Activated CD8-positive, alpha-beta T cell treated with anti-CD3 and anti-CD28 coated beads, Interleukin-2, amount 10 ng/mL, durations not matched to agents 7 days and 5 days (primary cell): ENCODE measurements at regions of chr9 and their contacts with region 1.

Region 1: DNA sequence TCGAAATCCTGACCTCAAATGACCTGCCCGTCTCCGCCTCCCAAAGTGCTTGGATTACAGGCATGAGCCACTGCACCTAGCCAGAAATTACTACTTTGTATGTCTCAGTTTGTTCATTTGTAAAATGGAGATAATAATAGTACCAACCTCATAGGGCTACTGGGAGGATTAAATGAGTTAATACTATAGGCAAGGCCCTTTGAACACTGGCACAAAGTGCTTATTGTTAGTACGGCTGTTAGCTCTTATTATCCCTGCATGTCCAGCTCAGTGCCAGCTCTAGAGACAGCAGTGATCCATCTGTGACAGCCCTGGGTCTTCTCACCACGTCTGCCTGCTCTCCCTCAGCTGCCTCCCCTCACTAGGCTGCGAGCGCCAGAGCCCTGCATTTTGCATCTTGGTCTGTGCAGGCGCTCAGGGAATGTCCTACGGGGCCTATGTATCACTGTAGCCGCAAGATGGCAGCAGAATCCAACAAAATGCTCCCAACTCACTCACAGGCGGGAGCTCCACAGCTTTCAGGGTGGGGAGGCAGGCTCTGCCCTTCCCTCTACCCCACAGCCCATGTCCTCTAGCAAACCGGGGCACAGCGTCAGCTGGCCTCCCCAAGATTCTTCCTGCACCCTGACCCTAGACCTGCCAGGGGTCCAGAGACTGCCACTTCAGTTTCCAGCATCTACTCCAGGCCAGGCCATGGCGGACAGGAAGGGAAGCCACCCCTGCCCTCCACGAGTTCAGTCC is 17.7 kb upstream of the AKNA start:
- DNase-seq: peak; percentile 90
- ATAC-seq: peak; percentile 98
- H3K4me3 Mint-ChIP-seq: no peak overlapping the region
- H3K27ac Mint-ChIP-seq: peak overlapping the region; percentile 62
- H3K4me1 Mint-ChIP-seq: peaks cover 14% of the 10 kb centered on the region
- H3K27me3 Mint-ChIP-seq: peaks cover 1% of the 10 kb centered on the region

Region 2: GRCh38 chr9:114207034-114207810 is 198.2 kb before region 1 on chr9:
- CTCF ChIA-PET with region 1: no interaction called
- POLR2A ChIA-PET with region 1: no interaction called
- DNase-seq: no peak
- ATAC-seq: no peak
- H3K4me3 Mint-ChIP-seq: no peak overlapping the region
- H3K27ac Mint-ChIP-seq: no peak overlapping the region
- H3K4me1 Mint-ChIP-seq: no peaks in the 10 kb centered on the region
- H3K27me3 Mint-ChIP-seq: no peaks in the 10 kb centered on the region

Region 3: GRCh38 chr9:114224247-114224610 is 181.2 kb before region 1 on chr9:
- CTCF ChIA-PET with region 1: no interaction called
- POLR2A ChIA-PET with region 1: no interaction called
- DNase-seq: no peak
- ATAC-seq: no peak
- H3K4me3 Mint-ChIP-seq: no peak overlapping the region
- H3K27ac Mint-ChIP-seq: no peak overlapping the region
- H3K4me1 Mint-ChIP-seq: no peaks in the 10 kb centered on the region
- H3K27me3 Mint-ChIP-seq: no peaks in the 10 kb centered on the region

Region 4: DNA sequence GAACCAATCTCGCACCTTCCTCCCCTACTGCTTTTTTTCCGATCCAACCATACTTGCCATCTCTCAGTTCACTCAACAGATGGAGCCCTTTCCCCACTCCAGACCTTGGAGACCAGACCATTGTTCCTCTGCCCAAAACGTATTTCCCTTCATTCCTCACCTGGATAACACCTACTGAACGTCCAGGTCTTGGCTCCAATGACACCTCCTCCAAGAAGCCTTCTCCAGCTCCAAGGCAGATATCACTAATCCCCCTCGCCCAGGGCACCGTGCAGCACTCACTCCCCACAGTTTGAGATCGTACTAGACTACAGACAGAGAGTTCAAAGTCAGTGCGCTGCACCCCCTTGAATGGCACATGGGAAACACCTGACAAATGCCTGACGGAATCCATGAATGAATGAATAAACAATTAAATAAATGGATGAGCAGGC is 29.4 kb after region 1 on chr9:
- CTCF ChIA-PET with region 1: interaction called, 29 read pairs
- POLR2A ChIA-PET with region 1: interaction called, 4 read pairs
- DNase-seq: no peak
- ATAC-seq: peak; percentile 30
- H3K4me3 Mint-ChIP-seq: no peak overlapping the region
- H3K27ac Mint-ChIP-seq: no peak overlapping the region
- H3K4me1 Mint-ChIP-seq: peaks cover 6% of the 10 kb centered on the region
- H3K27me3 Mint-ChIP-seq: peaks cover under 1% of the 10 kb centered on the region

Region 5: DNA sequence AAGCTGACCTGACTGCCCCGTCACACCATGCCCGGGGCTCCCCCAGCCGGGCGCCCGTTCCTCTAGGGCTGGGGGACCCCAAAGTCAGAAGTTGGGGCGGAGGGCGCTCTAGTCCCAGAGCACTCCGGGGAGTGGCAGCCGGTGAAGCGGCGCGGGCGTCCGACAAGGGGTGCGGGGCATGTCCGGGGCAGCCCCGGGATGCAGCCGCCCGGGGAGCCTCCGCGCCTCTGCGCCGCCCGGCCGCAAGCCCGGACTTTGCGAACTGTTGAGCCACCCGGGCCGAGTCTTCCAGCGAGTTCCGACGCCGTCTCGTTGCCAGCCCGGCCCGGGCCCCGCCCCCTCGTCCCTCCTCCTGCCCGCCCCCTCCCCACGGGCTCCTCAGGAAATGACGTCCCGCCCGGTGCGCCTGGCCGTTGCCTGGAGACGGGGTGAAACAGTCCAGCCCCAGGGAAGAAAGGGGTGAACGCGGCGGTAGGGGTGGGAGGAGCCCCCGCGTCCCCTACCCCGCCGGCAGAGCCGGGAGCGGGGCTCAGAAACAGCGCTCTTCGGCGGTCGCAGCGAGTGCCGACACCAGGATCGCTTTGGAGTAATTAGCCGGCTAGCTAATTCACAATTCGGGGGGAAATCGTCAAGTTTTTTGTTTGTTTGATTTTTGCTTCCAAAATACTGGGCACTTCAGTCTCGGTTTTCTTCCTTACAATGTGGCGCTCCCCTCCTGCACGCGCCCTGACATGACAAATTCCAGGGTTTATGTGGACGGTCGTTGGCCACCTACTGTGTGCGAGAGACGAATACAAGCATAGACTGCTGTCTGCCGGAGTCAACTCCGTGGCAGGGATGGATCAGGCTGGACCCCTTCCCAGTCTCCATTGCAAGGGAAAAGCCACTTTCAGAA is 100.0 kb after region 1 on chr9 and contains the start of gene WHRN:
- CTCF ChIA-PET with region 1: interaction called, 81 read pairs
- POLR2A ChIA-PET with region 1: no interaction called
- DNase-seq: peak; percentile 91
- ATAC-seq: peak; percentile 84
- H3K4me3 Mint-ChIP-seq: peak within 1 kb of the TSS; percentile 75
- H3K27ac Mint-ChIP-seq: peak within 1 kb of the TSS; percentile 56
- H3K4me1 Mint-ChIP-seq: peaks cover 25% of the 10 kb centered on the region
- H3K27me3 Mint-ChIP-seq: peaks cover 63% of the 10 kb centered on the region
- total RNA-seq, gene WHRN: 2.6 to 4.1 TPM

Region 6: DNA sequence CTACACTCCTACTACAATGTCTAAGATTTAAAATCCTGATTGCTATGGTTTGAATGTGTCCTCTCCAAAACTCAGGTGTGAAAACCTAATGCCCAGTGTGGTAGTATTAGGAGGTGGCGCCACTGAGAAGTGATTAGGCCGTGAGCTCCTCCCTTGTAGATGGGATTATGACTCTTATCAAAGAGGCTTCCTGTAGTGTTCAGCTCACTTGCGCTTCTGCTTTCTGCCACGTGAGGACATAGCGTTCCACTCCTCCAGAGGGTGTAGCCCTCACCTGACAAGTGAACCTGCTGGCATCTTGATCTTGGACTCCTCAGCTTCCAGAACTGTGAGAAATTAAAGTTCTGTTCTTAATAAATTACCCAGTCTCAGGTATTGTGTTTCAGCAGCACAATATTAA is 132.8 kb after region 1 on chr9:
- CTCF ChIA-PET with region 1: no interaction called
- POLR2A ChIA-PET with region 1: no interaction called
- DNase-seq: peak; percentile 45
- ATAC-seq: peak; percentile 70
- H3K4me3 Mint-ChIP-seq: no peak overlapping the region
- H3K27ac Mint-ChIP-seq: no peak overlapping the region
- H3K4me1 Mint-ChIP-seq: no peaks in the 10 kb centered on the region
- H3K27me3 Mint-ChIP-seq: peaks cover 14% of the 10 kb centered on the region

Region 7: DNA sequence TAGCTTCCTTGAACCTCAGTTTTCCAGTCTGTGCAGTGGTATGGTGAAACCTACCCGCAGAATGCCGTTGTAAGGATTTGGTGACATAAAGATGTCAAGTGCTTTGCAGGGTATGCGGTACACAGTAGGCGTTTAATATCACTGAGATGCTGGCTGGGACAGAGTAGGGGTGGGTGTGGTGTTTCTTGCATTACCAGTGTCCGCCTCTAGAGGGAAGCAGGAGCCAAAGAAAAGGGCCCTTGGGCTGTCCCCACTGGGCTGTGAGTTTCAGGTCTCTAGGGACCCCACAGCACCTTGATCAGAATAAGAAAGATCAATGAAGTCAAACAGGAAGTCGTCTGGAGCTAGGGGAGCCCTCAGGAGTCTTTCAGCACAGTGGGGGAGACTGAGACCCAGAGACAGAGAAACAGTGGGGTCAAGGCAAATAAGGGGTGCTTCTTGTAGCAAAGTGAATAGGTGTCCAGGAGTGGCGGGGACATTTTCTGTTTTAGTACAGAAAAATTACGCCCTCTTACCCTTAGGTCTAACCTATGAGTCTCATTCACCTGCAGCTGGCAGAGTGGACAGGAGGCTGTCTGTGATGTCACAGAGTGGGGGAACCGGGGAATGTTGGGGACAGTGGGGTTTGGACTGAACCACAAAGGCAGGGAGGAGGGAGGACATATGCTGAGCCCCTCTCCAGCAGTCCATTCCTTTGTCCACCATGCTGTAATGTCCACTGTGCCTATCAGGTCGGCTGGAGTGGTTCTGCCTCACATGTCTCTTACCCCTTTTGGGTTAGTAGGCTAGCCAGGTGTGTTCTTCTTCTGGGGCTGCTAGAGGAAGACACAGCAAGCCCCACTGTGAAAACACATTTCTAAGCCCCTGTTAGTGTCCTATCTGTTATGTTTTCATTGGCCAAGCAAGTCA is 256.9 kb after region 1 on chr9:
- CTCF ChIA-PET with region 1: interaction called, 12 read pairs
- POLR2A ChIA-PET with region 1: no interaction called
- DNase-seq: peak; percentile 82
- ATAC-seq: peak; percentile 93
- H3K4me3 Mint-ChIP-seq: no peak overlapping the region
- H3K27ac Mint-ChIP-seq: peak overlapping the region; percentile 9
- H3K4me1 Mint-ChIP-seq: peaks cover 8% of the 10 kb centered on the region
- H3K27me3 Mint-ChIP-seq: peaks cover 13% of the 10 kb centered on the region